ENCODE measurements at regions of chr10 and their contacts with region 1.

Region 1: GRCh38 chr10:44959247-44960087 is at the start of gene RASSF4:
- DNase-seq: peak; percentile 90 to 94 (median 92)
- H3K4me3 ChIP-seq: peak within 1 kb of the TSS; percentile 71
- H3K27ac ChIP-seq: peak within 1 kb of the TSS; percentile 33 to 73
- H3K4me1 ChIP-seq: peaks cover 8% of the 10 kb centered on the region
- H3K27me3 ChIP-seq: no peaks in the 10 kb centered on the region
- CTCF ChIP-seq: no peak
- EP300 ChIP-seq: no peak
- POLR2A ChIP-seq: peak; percentile 62
- total RNA-seq, gene RASSF4: 4.8 to 21.9 (median 7.3) TPM

Region 2: GRCh38 chr10:44809652-44810051 is 149.8 kb before region 1 on chr10:
- intact Hi-C with region 1: no loop called
- DNase-seq: no peak
- H3K4me3 ChIP-seq: no peak overlapping the region
- H3K27ac ChIP-seq: no peak overlapping the region
- H3K4me1 ChIP-seq: peaks cover 11% of the 10 kb centered on the region
- H3K27me3 ChIP-seq: no peaks in the 10 kb centered on the region
- CTCF ChIP-seq: no peak
- EP300 ChIP-seq: no peak
- POLR2A ChIP-seq: no peak

Region 3: GRCh38 chr10:44878706-44879530 is 80.5 kb before region 1 on chr10:
- intact Hi-C with region 1: loop called in 1 of 4 experiments (anchors 5 kb)
- DNase-seq: peak; percentile 91 to 93 (median 93)
- H3K4me3 ChIP-seq: peak overlapping the region; percentile 50
- H3K27ac ChIP-seq: peak overlapping the region; percentile 36 to 75
- H3K4me1 ChIP-seq: peaks cover 8% of the 10 kb centered on the region
- H3K27me3 ChIP-seq: no peaks in the 10 kb centered on the region
- CTCF ChIP-seq: peak in 1 of 3 donors; percentile 22
- EP300 ChIP-seq: no peak
- POLR2A ChIP-seq: no peak

Region 4: GRCh38 chr10:46787321-46787615 is 1827.8 kb after region 1 on chr10:
- intact Hi-C with region 1: no loop called
- DNase-seq: no peak
- H3K4me3 ChIP-seq: peak overlapping the region; percentile 77
- H3K27ac ChIP-seq: peak overlapping the region in 1 of 2 donors; percentile 48
- H3K4me1 ChIP-seq: no peaks in the 10 kb centered on the region
- H3K27me3 ChIP-seq: no peaks in the 10 kb centered on the region
- CTCF ChIP-seq: no peak
- EP300 ChIP-seq: no peak
- POLR2A ChIP-seq: no peak